ENCODE measurements at regions of chr2 and their contacts with region 1.

Region 1: GRCh38 chr2:40244675-40245074 is 207.2 kb downstream of the SLC8A1 start:
- DNase-seq: peak; percentile 42 to 57
- ATAC-seq: peak; percentile 68 to 89 (median 78)
- H3K4me3 ChIP-seq: no peak overlapping the region
- H3K27ac ChIP-seq: no peak overlapping the region
- H3K4me1 ChIP-seq: no peaks in the 10 kb centered on the region
- H3K27me3 ChIP-seq: no peaks in the 10 kb centered on the region
- CTCF ChIP-seq: peak; percentile 55

Region 2: DNA sequence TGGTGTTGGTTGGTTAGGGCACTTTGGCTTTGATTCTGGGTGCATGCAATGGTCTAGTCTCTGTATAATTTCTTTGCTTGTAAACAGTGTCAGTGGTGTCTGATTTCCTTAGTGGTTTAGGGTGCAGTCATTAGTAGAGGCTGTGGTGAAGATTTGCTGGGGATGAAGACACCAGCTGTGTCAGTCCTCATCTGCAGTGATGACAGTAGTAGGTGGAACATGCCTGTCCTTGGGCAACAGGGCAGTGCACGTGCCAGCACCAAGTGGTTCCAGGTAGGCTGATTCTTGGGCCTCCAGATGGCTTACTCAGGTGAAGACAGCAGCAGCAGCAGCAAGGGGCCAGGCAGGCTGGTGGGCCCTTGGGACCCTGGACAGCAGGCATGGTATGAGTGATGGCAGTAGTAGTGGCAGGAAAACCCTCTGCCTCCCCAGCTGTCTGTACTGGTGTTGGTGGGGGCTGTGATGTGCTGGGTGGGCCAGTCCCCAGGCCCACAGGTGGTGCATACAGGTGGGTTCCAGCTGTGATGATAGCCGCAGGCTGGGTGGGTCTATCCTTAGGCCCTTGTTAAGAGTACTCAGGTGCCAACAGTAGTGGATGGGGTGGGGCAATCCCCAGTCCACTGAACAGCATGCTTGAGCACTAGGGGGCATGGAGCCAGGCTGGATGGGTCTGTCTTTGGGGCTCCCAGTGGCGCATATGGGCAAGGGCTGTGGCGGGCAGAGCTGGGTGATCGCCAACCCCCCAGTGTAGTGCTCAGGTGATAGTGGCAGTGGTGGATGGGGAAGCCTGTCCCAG is 325.0 kb before region 1 on chr2:
- intact Hi-C with region 1: loop called in 1 of 2 experiments (anchors 5 kb)
- DNase-seq: peak in 1 of 2 donors; percentile 31
- ATAC-seq: no peak
- H3K4me3 ChIP-seq: no peak overlapping the region
- H3K27ac ChIP-seq: no peak overlapping the region
- H3K4me1 ChIP-seq: no peaks in the 10 kb centered on the region
- H3K27me3 ChIP-seq: no peaks in the 10 kb centered on the region
- CTCF ChIP-seq: no peak

Region 3: DNA sequence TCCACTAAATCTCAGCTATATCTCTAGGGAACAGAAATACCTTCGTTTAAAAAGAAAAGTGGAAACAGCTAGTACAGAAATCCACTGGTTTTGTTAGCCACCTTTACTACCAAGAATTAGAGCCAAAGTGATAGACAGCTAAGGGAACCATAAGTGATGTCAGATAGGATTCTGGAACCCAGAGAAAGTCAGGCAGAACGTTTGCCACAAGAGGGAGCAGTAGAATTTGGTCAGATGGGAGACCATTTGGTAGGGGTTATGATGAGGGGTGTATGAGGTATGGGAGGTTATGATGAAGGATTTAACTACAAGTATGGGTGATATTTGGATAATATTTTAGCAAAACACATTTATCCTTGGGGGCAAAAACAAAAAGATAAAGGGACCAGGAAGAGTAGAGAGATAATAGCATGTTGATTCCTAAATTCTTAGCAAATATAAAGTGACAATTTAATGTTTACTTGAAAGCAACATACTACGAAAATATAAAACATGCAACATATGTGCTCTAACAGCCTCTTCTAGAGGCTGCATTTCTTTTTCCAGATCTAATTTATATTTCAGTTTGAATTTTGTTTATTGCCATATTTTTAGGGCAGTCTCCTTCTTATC is 203.9 kb after region 1 on chr2:
- intact Hi-C with region 1: loop called in 1 of 2 experiments (anchors 10 kb)
- DNase-seq: no peak
- ATAC-seq: no peak
- H3K4me3 ChIP-seq: no peak overlapping the region
- H3K27ac ChIP-seq: no peak overlapping the region
- H3K4me1 ChIP-seq: no peaks in the 10 kb centered on the region
- H3K27me3 ChIP-seq: peaks cover 0 to 34% (median 1%) of the 10 kb centered on the region in 3 donors
- CTCF ChIP-seq: peak; percentile 40

Region 4: GRCh38 chr2:41038408-41038807 is 793.7 kb after region 1 on chr2:
- intact Hi-C with region 1: no loop called
- DNase-seq: no peak
- ATAC-seq: no peak
- H3K4me3 ChIP-seq: no peak overlapping the region
- H3K27ac ChIP-seq: no peak overlapping the region
- H3K4me1 ChIP-seq: no peaks in the 10 kb centered on the region
- H3K27me3 ChIP-seq: no peaks in the 10 kb centered on the region
- CTCF ChIP-seq: no peak